Naive thymus-derived CD4-positive, alpha-beta T cell (primary cell): ENCODE measurements at regions of chr9 and their contacts with region 1.

Region 1: GRCh38 chr9:119968836-119969707 is 599.8 kb upstream of the BRINP1 start:
- DNase-seq: peak in 6 of 9 donors; percentile 0 to 43 (median 2)
- ATAC-seq: peak; percentile 72
- H3K4me3 ChIP-seq: no peak overlapping the region
- H3K4me3 Mint-ChIP-seq: no peak overlapping the region
- H3K27ac ChIP-seq: no peak overlapping the region
- H3K27ac Mint-ChIP-seq: no peak overlapping the region
- H3K4me1 ChIP-seq: no peaks in the 10 kb centered on the region
- H3K4me1 Mint-ChIP-seq: peaks cover 0 to 5% (median 2%) of the 10 kb centered on the region in 7 donors
- H3K27me3 ChIP-seq: no peaks in the 10 kb centered on the region
- H3K27me3 Mint-ChIP-seq: peaks cover 1 to 28% (median 19%) of the 10 kb centered on the region in 5 donors

Region 2: DNA sequence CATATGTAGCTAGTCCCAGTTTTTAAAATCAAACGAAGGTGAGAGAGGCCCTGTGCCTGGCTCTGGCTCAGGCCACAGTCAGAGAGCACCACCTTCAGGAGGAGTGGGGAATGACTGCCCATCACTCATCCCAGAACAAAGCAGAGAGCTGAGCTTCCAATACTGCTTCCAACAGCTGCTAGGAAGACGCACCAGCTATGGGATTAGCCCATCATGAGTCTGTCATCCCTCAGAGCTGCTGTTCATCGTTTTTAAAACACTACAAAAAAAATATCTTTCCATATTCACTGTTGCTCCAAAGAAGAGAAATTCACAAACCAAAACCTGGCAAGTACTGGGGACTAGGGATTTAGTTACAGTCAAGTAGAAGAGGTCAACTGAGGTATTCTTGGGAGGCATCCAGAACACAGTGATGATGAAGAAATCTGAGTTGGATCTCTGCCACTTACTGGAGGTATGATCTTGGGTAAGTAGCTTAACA is 508.5 kb after region 1 on chr9:
- CTCF ChIA-PET with region 1: no interaction called
- POLR2A ChIA-PET with region 1: no interaction called
- intact Hi-C with region 1: loop called in 1 of 2 experiments (anchors 2 kb)
- DNase-seq: peak in 3 of 9 donors; percentile 2 to 46 (median 14)
- ATAC-seq: peak; percentile 70
- H3K4me3 ChIP-seq: no peak overlapping the region
- H3K4me3 Mint-ChIP-seq: no peak overlapping the region
- H3K27ac ChIP-seq: no peak overlapping the region
- H3K27ac Mint-ChIP-seq: peak overlapping the region in 1 of 9 donors; percentile 19
- H3K4me1 ChIP-seq: no peaks in the 10 kb centered on the region
- H3K4me1 Mint-ChIP-seq: peaks cover 0 to 10% (median 0%) of the 10 kb centered on the region in 7 donors
- H3K27me3 ChIP-seq: no peaks in the 10 kb centered on the region
- H3K27me3 Mint-ChIP-seq: no peaks in the 10 kb centered on the region